Activated naive CD4-positive, alpha-beta T cell treated with anti-CD3 and anti-CD28 coated beads for 36 hours (primary cell): ENCODE measurements at regions of chr14 and their contacts with region 1.

Region 1: GRCh38 chr14:69605738-69606137 is 5.7 kb upstream of the SUSD6 start:
- DNase-seq: no peak
- H3K4me3 Mint-ChIP-seq: no peak overlapping the region
- H3K27ac Mint-ChIP-seq: no peak overlapping the region
- H3K4me1 Mint-ChIP-seq: peaks cover 32% of the 10 kb centered on the region
- H3K27me3 Mint-ChIP-seq: no peaks in the 10 kb centered on the region

Region 2: GRCh38 chr14:69567562-69567961 is 38.2 kb before region 1 on chr14:
- CTCF ChIA-PET with region 1: no interaction called
- intact Hi-C with region 1: no loop called
- DNase-seq: no peak
- H3K4me3 Mint-ChIP-seq: no peak overlapping the region
- H3K27ac Mint-ChIP-seq: no peak overlapping the region
- H3K4me1 Mint-ChIP-seq: no peaks in the 10 kb centered on the region
- H3K27me3 Mint-ChIP-seq: peaks cover 36% of the 10 kb centered on the region

Region 3: GRCh38 chr14:69708586-69709174 is 102.9 kb after region 1 on chr14:
- CTCF ChIA-PET with region 1: interaction called, 11 read pairs
- intact Hi-C with region 1: no loop called
- DNase-seq: peak; percentile 54
- H3K4me3 Mint-ChIP-seq: no peak overlapping the region
- H3K27ac Mint-ChIP-seq: peak overlapping the region; percentile 51
- H3K4me1 Mint-ChIP-seq: peaks cover 34% of the 10 kb centered on the region
- H3K27me3 Mint-ChIP-seq: no peaks in the 10 kb centered on the region